Transverse colon (tissue), 4 donors: ENCODE measurements at regions of chr10 and their contacts with region 1.

Region 1: DNA sequence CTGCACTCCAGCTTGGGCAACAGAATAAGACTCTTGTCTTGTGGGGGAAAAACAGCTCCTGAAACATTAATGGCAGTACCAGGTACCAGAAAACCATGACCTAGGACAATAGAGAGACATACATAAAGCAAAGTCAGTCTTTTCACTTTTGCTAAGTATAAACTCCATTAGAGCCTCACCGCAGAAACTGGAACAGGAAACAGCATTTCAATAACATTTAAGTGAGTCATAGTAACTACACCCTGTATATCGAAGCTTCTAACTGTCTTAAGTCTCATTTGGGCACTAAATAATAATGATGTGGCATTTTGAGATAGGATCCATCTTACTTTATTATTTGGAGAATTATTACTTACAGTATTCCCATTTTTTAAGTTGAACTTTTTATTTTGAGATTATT is 517.8 kb upstream of the CELF2 start:
- DNase-seq: no peak
- H3K4me3 ChIP-seq: no peak overlapping the region
- H3K27ac ChIP-seq: no peak overlapping the region
- H3K4me1 ChIP-seq: no peaks in the 10 kb centered on the region
- H3K27me3 ChIP-seq: no peaks in the 10 kb centered on the region
- CTCF ChIP-seq: no peak
- EP300 ChIP-seq: no peak
- POLR2A ChIP-seq: no peak

Region 2: DNA sequence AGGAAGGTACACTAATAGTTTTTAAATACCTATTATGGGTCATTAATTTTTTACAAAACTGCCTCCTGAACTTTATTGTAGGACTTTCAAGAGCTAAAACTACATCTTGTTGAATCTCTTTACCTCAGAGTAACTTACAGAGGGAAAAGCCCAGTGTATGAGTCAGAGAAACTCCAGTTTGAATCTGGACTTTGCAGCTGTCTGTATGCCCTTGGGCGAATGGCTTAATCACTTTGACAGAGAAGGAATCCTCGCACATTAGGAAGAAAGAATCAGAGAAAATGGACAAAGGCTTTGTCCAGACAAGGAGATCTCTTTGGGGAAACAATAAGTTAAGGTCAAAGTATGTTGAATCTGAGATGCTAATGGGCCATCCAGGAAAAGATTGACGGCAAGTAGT is 33.6 kb after region 1 on chr10:
- in situ Hi-C with region 1: no loop called
- intact Hi-C with region 1: no loop called
- DNase-seq: no peak
- H3K4me3 ChIP-seq: no peak overlapping the region
- H3K27ac ChIP-seq: no peak overlapping the region
- H3K4me1 ChIP-seq: no peaks in the 10 kb centered on the region
- H3K27me3 ChIP-seq: no peaks in the 10 kb centered on the region
- CTCF ChIP-seq: no peak
- EP300 ChIP-seq: no peak
- POLR2A ChIP-seq: no peak

Region 3: GRCh38 chr10:10685566-10685965 is 185.7 kb after region 1 on chr10:
- in situ Hi-C with region 1: no loop called
- intact Hi-C with region 1: loop called (anchors 10 kb)
- DNase-seq: no peak
- H3K4me3 ChIP-seq: no peak overlapping the region
- H3K27ac ChIP-seq: no peak overlapping the region
- H3K4me1 ChIP-seq: no peaks in the 10 kb centered on the region
- H3K27me3 ChIP-seq: no peaks in the 10 kb centered on the region
- CTCF ChIP-seq: no peak
- EP300 ChIP-seq: no peak
- POLR2A ChIP-seq: no peak